ENCODE measurements at regions of chr9 and their contacts with region 1.

Region 1: DNA sequence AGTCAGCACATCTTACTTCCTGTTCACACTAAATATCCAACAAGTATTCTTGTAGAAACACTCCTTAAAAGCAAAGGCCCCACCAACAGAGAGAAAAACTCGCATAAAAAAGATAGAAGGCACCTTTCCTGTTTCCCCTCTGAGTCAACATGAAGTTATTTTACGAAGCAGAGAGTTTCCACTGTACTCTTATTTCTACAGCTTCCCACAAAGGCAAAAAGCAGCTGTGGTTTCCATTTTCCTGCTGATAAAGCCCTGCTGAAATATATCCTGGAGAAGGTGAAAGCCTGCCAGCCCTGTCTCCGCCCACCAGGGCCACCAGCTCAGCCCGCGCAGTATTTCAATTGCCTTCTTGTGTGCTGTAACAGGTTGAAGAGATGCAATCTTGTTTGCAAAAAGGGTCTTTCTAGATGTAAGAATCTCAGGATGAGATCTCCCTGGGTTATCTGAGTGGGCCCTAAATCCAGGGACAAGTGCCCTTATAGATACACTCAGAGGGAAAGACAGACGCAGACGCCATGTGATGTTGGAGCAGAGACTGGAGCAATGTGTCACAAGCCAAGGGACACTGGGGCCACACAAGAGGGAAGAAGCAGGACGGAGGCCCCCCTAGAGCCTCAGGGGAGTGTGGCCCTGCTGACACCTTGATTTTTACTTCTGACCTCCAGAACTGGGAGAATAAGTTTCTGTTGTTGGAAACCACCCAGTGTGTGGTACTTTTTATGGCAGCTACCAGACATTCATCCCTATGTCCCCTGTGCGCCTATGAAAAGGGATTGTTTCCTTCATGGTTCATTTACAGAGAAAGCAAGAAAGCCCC is 19.9 kb downstream of the SEMA4D start:
- DNase-seq: peak; percentile 76

Region 2: GRCh38 chr9:89522261-89522958 is 44.4 kb after region 1 on chr9:
- intact Hi-C with region 1: loop called in 1 of 2 experiments (anchors 1 kb)
- DNase-seq: no peak

Region 3: GRCh38 chr9:89536145-89536574 is 58.1 kb after region 1 on chr9:
- intact Hi-C with region 1: no loop called
- DNase-seq: no peak

Region 4: DNA sequence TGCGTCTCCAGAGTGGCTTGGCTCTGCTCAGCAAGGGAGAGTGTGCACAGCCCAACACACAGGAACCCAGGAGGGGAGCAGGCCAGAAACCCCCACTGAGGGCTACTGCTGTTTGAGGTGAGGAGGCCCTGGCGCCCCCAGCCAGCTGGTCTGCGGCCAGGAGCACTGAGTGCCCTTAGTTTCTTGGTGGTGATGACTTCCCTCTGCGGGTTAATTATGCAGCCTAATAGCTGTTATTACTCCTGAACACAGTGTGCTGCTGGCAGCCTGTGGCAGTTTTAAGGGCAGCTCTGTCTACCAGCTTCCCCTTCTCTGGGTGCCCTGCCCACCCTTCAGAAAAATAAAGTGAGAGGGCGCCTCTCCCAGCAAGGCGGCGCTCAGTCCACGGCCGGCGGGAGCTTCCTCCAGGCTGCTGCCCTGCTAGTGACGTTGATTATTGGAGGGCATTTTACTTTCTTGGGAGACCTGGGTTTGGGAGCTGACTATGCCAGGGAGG is 146.0 kb after region 1 on chr9:
- intact Hi-C with region 1: no loop called
- DNase-seq: no peak

Measured in posterior vena cava (tissue), 2 donors.